PC-9 (cell line): ENCODE measurements at regions of chr15 and their contacts with region 1.

Region 1: GRCh38 chr15:55290528-55291057 is 980 bp upstream of the RAB27A start:
- DNase-seq: peak; percentile 52 to 79
- H3K4me3 ChIP-seq: peak overlapping the region; percentile 94; the same call in 1 of the 2 replicates
- H3K27ac ChIP-seq: no peak overlapping the region
- H3K4me1 ChIP-seq: no peaks in the 10 kb centered on the region
- H3K27me3 ChIP-seq: no peaks in the 10 kb centered on the region
- CTCF ChIP-seq: peak; percentile 82

Region 2: DNA sequence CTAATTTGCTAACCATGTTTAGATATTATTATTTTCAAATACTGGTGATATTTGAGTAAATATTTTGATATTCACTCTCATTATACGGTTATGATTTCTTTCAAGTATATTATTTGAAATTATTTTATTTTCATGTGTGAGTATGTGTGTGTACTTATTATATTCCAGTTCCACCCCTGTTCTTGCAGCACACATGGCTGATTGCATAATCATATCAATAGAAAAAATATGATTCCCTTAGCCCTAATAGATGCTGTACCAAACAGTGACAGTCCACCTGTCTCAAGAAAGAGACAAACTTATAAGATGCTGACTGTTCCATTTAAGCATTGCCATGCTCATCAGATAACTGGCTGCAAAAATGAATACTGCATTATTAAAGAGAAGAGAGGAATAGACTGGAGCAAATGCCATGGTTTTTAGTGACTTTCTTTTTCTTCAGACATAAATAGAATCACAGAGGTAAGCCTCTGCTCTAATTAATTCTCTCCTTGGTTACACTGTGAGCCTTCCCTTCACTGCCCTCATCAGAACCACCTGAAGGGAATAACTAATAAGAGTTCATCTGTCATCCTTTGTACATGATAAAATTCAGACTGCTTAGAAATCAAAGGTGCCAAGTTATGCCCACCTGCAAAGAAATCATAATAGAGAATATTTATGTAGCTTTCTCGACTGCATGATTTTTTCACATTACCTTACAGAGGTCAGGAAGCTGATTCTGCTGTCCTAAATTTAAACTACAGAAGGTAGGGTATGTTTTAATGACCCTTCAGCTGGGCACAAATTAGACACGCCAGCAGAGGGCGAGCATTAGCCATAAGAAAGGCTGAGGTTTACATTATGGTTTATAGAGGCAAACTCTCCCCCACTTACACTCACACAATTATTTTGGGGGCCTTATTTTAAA is 1328.0 kb before region 1 on chr15:
- CTCF ChIA-PET with region 1: no interaction called
- POLR2A ChIA-PET with region 1: no interaction called
- intact Hi-C with region 1: loop called (anchors 2 kb)
- DNase-seq: peak in 1 of 2 experiments; percentile 7
- H3K4me3 ChIP-seq: no peak overlapping the region
- H3K27ac ChIP-seq: no peak overlapping the region
- H3K4me1 ChIP-seq: no peaks in the 10 kb centered on the region
- H3K27me3 ChIP-seq: no peaks in the 10 kb centered on the region
- CTCF ChIP-seq: peak; percentile 63

Region 3: DNA sequence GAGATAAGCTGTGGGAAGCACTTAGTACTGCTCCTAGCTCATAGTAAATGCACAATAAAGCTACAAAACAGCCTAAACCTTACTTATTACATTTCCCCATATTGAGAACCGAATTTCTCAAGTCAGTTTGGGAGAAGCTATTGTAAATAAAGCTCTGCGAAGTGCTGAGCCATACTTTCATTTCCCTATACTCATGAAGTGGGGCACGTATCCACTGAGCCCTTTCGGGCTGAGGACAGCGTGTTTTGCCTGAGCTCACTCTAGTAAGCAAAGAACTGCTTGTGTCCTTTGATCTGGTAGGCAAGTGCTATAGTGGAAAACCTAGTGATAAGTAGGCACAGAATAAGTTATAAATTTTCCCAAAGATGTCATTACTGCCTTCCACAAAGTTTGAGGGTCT is 258.9 kb before region 1 on chr15:
- CTCF ChIA-PET with region 1: no interaction called
- POLR2A ChIA-PET with region 1: no interaction called
- intact Hi-C with region 1: no loop called
- DNase-seq: no peak
- H3K4me3 ChIP-seq: no peak overlapping the region
- H3K27ac ChIP-seq: no peak overlapping the region
- H3K4me1 ChIP-seq: no peaks in the 10 kb centered on the region
- H3K27me3 ChIP-seq: no peaks in the 10 kb centered on the region
- CTCF ChIP-seq: no peak

Region 4: DNA sequence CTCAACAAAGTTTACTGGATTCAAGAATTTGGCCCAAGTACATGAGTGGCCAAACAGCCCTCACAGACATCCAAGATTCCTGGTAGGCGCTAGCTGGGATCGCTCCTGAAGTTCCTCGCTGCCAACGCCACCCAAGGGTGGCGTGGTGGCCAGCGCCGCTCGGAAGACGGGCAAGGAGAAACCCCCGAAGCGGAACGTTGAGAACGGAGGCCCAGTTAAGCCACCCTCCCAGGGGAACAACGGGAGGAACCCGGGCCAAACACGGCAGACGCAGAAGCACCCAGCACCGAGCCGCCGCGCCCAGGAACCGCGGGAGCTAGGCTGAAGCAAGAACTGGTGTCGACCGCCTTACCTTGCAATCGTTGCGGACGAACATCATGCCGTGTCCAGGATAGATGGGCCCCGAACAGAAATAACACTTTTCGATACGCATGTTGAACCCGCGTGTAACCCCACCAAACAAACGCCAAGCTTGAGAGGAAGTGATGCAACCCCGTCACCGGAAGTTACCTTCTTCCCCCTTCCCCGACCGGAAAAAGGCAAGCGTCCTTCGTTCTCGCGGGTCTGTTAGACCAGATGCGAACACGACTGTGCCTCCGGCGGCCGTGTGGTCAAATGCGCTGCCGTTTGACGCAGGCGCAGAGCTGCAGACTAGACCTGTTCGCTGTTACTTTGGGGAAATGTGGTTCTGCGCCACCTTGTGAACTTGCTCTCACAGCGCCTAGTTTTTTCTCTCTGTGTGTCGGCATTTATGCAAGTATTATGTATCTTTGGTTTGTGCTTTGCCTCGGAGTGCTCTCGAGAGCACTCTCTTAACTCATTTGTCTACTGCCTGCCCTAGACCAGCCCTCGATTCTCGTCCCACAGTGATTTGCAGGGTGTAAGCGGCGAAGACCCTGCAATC is 93.9 kb before region 1 on chr15 and contains the start of gene RSL24D1:
- CTCF ChIA-PET with region 1: no interaction called
- POLR2A ChIA-PET with region 1: no interaction called
- intact Hi-C with region 1: loop called (anchors 5 kb)
- DNase-seq: peak; percentile 92 to 94
- H3K4me3 ChIP-seq: peak within 1 kb of the TSS; percentile 99
- H3K27ac ChIP-seq: peak within 1 kb of the TSS; percentile 95
- H3K4me1 ChIP-seq: peaks cover 29% of the 10 kb centered on the region
- H3K27me3 ChIP-seq: no peaks in the 10 kb centered on the region
- CTCF ChIP-seq: no peak; the same call in 1 of the 2 replicates
- total RNA-seq, gene RSL24D1: 87.0 and 91.7 TPM in 2 replicates

Region 5: GRCh38 chr15:55221090-55222011 is 69.2 kb before region 1 on chr15:
- CTCF ChIA-PET with region 1: no interaction called
- POLR2A ChIA-PET with region 1: no interaction called
- intact Hi-C with region 1: loop called (anchors 1 kb)
- DNase-seq: peak; percentile 33 to 92
- H3K4me3 ChIP-seq: peak overlapping the region; percentile 31; the same call in 1 of the 2 replicates
- H3K27ac ChIP-seq: peak overlapping the region; percentile 84
- H3K4me1 ChIP-seq: peaks cover 23% of the 10 kb centered on the region
- H3K27me3 ChIP-seq: no peaks in the 10 kb centered on the region
- CTCF ChIP-seq: no peak

Region 6: DNA sequence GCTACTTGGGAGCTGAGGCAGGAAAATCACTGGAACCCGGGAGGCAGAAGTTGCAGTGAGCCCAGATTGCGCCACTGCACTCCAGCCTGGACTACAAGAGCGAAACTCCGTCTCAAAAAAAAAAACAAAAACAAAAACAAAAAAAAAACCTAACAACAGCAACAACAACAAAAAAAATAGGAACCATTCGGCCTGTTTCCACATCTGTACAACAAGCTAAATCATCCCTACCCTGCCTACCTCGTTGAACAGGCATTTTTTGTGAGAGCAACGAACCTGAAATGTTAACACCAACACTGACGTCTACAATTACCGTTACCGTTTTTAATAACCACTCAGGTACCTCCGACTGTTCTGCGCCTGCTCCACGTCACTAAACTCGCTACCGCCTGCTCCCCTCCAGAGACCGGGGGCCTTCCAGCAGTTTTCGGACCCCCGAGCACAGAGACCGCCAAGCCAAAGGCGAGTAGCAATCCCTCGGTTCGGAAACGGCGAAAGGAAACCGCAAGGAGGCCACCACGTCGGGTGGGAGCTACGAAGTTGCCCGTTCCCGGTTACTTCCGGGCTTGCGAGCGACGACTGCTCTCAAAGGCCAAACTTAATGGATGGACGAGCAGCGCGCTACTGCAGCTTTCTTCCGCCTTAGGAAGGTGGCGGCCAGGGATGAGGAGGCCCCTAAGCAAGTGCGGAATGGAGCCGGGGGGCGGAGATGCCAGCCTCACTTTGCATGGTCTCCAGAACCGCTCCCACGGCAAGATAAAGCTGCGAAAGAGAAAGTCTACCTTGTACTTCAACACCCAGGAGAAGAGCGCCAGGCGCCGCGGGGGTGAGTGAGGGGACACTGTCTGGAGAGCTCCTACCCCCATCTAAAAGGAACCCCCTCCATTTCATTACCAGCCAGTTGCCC is 28.2 kb after region 1 on chr15 and contains the starts of genes PIGB and PIGBOS1:
- CTCF ChIA-PET with region 1: no interaction called
- POLR2A ChIA-PET with region 1: no interaction called
- intact Hi-C with region 1: loop called (anchors 2 kb)
- DNase-seq: peak; percentile 64 to 80
- H3K4me3 ChIP-seq: peak within 1 kb of the TSS; percentile 76
- H3K27ac ChIP-seq: peak within 1 kb of the TSS; percentile 81
- H3K4me1 ChIP-seq: no peaks in the 10 kb centered on the region
- H3K27me3 ChIP-seq: no peaks in the 10 kb centered on the region
- CTCF ChIP-seq: no peak
- total RNA-seq, gene PIGB: 12.2 and 17.1 TPM in 2 replicates
- total RNA-seq, gene PIGBOS1: 9.9 and 10.8 TPM in 2 replicates

Region 7: GRCh38 chr15:55434989-55435825 is 144.6 kb after region 1 on chr15:
- CTCF ChIA-PET with region 1: interaction called, 3 read pairs
- POLR2A ChIA-PET with region 1: no interaction called
- intact Hi-C with region 1: loop called (anchors 1 kb)
- DNase-seq: peak; percentile 5 to 37
- H3K4me3 ChIP-seq: no peak overlapping the region
- H3K27ac ChIP-seq: no peak overlapping the region
- H3K4me1 ChIP-seq: no peaks in the 10 kb centered on the region
- H3K27me3 ChIP-seq: no peaks in the 10 kb centered on the region
- CTCF ChIP-seq: peak; percentile 65

Region 8: DNA sequence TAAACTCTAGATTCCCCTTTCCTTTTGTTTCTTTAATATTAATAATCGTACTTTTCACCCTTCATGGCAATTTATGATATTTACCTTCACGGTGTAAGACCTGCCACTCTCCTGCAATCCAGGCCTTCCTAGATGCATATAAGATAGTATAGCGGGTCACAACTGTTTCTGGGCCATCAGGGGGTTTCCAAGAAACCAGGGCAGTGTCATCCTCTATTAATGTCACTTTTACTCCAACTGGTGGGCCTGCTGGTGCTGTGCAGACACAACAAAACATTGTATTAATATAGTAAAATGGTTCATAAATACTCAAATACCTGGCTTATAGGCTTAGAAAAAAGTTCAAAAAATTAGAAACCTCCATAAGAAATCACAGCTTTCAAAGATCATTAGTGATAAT is 346.5 kb after region 1 on chr15:
- CTCF ChIA-PET with region 1: no interaction called
- POLR2A ChIA-PET with region 1: no interaction called
- intact Hi-C with region 1: loop called (anchors 1 kb)
- DNase-seq: no peak
- H3K4me3 ChIP-seq: no peak overlapping the region
- H3K27ac ChIP-seq: no peak overlapping the region
- H3K4me1 ChIP-seq: no peaks in the 10 kb centered on the region
- H3K27me3 ChIP-seq: no peaks in the 10 kb centered on the region
- CTCF ChIP-seq: no peak